Motor neuron (in vitro differentiated cells): ENCODE measurements at regions of chr11 and their contacts with region 1.

Region 1: DNA sequence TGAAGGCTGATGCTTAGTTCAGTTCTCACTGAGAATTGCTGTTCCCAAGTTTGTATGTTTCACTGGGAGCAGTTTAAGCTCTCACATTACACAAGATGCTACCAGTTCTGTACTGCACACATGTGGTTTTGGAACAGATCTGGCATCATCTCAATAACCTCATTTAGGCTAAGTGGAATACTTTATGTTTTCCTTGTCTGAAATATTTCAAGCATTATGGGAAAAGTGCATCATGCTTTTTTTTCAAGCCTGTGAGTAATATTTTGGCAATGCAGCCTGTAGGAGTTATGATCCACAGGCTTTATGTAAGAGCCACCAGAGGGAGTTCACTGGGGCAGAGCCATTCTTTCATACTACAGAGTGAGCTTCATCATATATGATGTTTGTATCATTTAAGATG is 141.5 kb downstream of the OR4C45 start:
- ATAC-seq: peak in 2 of 8 experiments; percentile 54 to 67
- H3K4me3 ChIP-seq: no peak overlapping the region
- H3K27ac ChIP-seq: no peak overlapping the region
- H3K4me1 ChIP-seq: no peaks in the 10 kb centered on the region

Region 2: DNA sequence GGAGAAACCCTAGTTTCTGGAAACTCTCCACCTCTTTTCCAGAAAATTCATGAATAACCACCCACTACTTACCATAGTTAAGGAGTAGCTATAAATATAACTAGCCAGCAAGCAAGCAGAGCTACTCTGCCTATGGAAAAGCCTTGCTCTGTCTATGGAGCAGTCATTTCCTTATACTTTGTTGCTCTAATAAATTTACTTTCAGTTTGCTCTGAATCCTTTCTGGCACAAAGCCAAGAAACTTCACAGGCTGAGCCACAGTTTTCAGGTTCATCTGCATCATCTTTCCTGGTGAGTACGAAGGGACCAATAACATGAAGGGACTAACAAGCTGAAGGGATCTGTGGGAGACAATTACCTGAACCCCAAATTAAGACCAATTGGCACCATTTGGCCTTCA is 136.9 kb before region 1 on chr11:
- in situ Hi-C with region 1: no loop called
- ATAC-seq: peak in 2 of 8 experiments; percentile 78
- H3K4me3 ChIP-seq: no peak overlapping the region
- H3K27ac ChIP-seq: no peak overlapping the region
- H3K4me1 ChIP-seq: no peaks in the 10 kb centered on the region

Region 3: GRCh38 chr11:50102916-50103315 is 71.3 kb before region 1 on chr11:
- in situ Hi-C with region 1: no loop called
- ATAC-seq: no peak
- H3K4me3 ChIP-seq: no peak overlapping the region
- H3K27ac ChIP-seq: no peak overlapping the region
- H3K4me1 ChIP-seq: no peaks in the 10 kb centered on the region

Region 4: DNA sequence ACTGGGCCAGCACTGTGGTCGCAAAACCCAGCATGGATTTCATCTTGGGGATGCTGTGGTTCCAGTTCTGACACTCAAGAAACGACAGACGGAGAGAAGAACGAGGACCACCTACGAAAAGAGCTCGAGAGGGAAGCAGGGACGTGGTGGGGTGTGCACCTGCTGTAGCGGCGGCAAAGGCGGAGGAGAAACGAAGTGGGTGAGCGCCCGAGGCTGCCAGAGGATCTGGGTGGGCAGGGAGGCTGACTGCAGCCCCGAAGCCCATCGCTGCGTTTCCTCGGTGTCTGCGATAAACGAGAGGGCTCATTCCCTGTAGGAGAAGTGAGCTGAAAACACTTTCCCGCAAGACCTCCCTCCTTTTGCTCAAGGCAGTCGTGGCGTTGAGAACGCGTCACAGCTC is 104.6 kb after region 1 on chr11:
- in situ Hi-C with region 1: no loop called
- ATAC-seq: no peak
- H3K4me3 ChIP-seq: no peak overlapping the region
- H3K27ac ChIP-seq: no peak overlapping the region
- H3K4me1 ChIP-seq: no peaks in the 10 kb centered on the region

Region 5: DNA sequence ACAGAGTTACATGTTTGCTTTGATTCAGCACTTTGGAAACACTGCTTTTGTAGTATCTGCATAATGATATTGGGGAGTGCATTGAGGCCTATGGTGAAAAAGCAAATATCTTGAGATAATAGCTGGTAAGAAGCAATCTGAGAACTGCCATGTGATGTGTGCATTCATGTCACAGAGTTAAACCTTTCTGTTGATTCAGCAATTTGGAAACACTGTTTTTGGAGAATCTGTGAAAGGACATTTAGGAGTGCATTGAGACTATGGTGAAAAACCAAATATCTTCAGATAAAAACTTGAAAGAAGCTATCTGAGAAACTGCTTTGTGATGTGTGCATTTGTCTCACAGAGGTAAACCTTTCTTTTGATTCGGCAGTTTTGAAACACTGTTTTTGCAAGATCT is 205.3 kb after region 1 on chr11:
- in situ Hi-C with region 1: loop called in 1 of 9 experiments (anchors 25 kb)
- ATAC-seq: no peak
- H3K4me3 ChIP-seq: no peak overlapping the region
- H3K27ac ChIP-seq: no peak overlapping the region
- H3K4me1 ChIP-seq: no peaks in the 10 kb centered on the region

Region 6: DNA sequence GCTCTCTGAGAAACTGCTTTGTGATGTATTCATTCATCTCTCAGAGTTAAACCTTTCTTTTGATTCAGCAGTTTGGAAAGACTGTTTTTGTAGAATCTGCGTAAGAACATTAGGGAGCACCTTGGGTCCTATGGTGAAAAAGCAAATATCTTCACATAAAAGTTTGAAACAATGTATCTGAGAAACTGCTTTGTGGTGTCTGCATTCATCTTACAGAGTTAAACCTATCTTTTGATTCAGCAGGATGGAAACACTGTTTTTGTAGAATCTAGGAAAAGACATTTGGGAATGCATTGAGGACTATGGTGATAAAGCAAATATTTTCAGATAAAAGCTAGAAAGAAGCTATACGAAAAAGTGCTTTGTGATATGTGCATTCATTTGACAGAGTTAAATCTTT is 219.8 kb after region 1 on chr11:
- in situ Hi-C with region 1: no loop called
- ATAC-seq: no peak
- H3K4me3 ChIP-seq: no peak overlapping the region
- H3K27ac ChIP-seq: no peak overlapping the region
- H3K4me1 ChIP-seq: no peaks in the 10 kb centered on the region